Activated T-helper 2 cell treated with anti-CD3 and anti-CD28 coated beads, Interferon-gamma antibody, Interleukin-2, Interleukin-4, amounts not matched to agents 10 μg/mL and 5 μg/mL and 100 μg/mL, durations not matched to agents 14 hours and 24 hours and 36 hours (primary cell): ENCODE measurements at regions of chr2 and their contacts with region 1.

Region 1: DNA sequence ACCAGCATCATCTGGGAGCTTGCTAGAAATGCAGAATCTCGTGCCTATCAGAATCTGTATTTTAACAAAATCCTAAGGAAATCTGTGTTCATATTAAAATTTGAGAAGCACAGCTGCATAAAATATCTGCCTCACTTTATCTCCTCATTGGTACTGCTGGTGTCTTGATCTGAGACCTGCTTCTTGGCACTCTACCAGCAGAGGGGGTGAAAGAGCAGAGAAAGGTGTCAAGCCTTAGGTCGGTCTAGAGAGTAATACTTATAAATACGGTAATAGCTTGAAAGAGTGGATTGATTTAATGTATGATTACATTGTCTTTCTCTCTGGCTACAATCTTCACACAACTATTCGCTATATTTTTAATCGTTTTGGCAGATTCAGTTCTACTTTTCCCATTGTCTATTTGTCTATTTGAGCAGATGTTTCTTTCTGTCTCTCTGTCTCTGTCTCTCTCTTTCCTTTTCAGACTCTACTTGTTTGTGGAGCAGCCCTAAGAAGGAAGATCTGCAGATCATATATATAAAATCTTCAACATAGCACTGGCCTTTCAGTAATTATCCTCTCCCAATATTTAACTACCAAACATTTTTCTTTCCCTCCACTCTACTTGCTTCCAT is 1.7 kb upstream of the GCG start:
- DNase-seq: peak; percentile 35
- H3K4me3 Mint-ChIP-seq: no peak overlapping the region
- H3K27ac Mint-ChIP-seq: no peak overlapping the region
- H3K4me1 Mint-ChIP-seq: peaks cover 5% of the 10 kb centered on the region
- H3K27me3 Mint-ChIP-seq: peaks cover 49% of the 10 kb centered on the region

Region 2: GRCh38 chr2:162221064-162221463 is 67.3 kb after region 1 on chr2:
- intact Hi-C with region 1: loop called (anchors 5 kb)
- DNase-seq: peak; percentile 50
- H3K4me3 Mint-ChIP-seq: no peak overlapping the region
- H3K27ac Mint-ChIP-seq: no peak overlapping the region
- H3K4me1 Mint-ChIP-seq: no peaks in the 10 kb centered on the region
- H3K27me3 Mint-ChIP-seq: peaks cover 31% of the 10 kb centered on the region

Region 3: DNA sequence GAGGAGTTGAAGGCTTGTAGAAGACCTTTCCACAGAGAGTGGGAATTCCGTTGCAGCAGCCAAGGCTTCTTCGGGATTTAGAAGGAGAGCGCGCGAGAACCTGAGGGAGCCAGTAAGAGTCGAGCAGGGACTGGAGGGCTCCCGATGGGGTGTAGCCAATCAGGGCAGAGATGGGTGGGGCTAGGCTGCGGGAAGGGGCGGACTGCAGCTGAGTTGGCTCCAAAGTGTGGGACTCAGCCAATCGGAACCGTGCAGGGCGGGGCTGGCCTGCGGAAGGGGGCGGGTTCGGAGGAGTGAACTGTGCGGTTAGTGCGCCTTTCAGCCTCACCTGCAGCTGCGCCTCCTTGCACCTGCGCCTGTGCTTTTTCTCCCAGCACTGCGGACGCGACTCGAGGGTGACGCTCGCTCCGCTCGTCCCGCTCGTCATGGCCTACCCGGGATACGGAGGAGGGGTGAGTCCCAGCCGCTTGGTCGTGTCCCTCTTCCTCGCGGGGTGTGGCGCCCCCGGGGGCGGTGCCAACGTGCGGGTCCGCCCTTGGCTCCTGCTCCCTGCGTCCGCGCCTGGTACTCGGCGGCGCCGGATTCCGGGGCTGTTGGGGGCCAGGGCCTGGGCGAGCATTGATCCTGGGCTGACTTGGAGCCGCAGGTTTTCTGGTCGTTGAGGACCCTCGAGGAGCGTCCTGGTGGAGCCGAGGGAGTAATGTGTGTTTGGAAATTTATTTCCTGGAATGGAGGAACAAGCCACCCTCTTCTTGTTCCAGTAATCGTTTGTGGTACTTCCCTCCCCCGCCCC is 190.3 kb after region 1 on chr2 and contains the start of gene GCA:
- intact Hi-C with region 1: no loop called
- DNase-seq: peak; percentile 97
- H3K4me3 Mint-ChIP-seq: peak within 1 kb of the TSS; percentile 89
- H3K27ac Mint-ChIP-seq: peak within 1 kb of the TSS; percentile 54
- H3K4me1 Mint-ChIP-seq: peaks cover 18% of the 10 kb centered on the region
- H3K27me3 Mint-ChIP-seq: peaks cover 10% of the 10 kb centered on the region
- total RNA-seq, gene GCA: 11.2 and 11.7 TPM in 2 replicates